Motor neuron (in vitro differentiated cells): ENCODE measurements at regions of chr9 and their contacts with region 1.

Region 1: GRCh38 chr9:83334320-83334719 is 203.9 kb downstream of the FRMD3 start:
- ATAC-seq: peak in 6 of 8 experiments; percentile 57 to 99 (median 94)
- H3K4me3 ChIP-seq: no peak overlapping the region
- H3K27ac ChIP-seq: no peak overlapping the region
- H3K4me1 ChIP-seq: no peaks in the 10 kb centered on the region

Region 2: GRCh38 chr9:83538172-83538889 is 204.0 kb after region 1 on chr9 and contains the start of gene FRMD3:
- in situ Hi-C with region 1: loop called in 2 of 9 experiments (anchors 10 to 25 kb)
- ATAC-seq: peak; percentile 90 to 95 (median 94)
- H3K4me3 ChIP-seq: peak within 1 kb of the TSS; percentile 47 to 83 (median 56)
- H3K27ac ChIP-seq: peak within 1 kb of the TSS; percentile 50 to 77
- H3K4me1 ChIP-seq: peaks cover 0 to 5% of the 10 kb centered on the region in 2 donors
- total RNA-seq, gene FRMD3: 1.3 to 34.4 (median 4.0) TPM